ENCODE measurements at regions of chr10 and their contacts with region 1.

Region 1: GRCh38 chr10:31146491-31147209 is 115.0 kb upstream of the ZNF438 start:
- DNase-seq: no peak
- ATAC-seq: no peak; the same call in 1 of the 2 replicates
- H3K4me3 ChIP-seq: no peak overlapping the region
- H3K27ac ChIP-seq: no peak overlapping the region
- H3K4me1 ChIP-seq: no peaks in the 10 kb centered on the region
- H3K27me3 ChIP-seq: no peaks in the 10 kb centered on the region
- CTCF ChIP-seq: no peak

Region 2: GRCh38 chr10:31166606-31167005 is 20.0 kb after region 1 on chr10:
- CTCF ChIA-PET with region 1: no interaction called
- POLR2A ChIA-PET with region 1: interaction called, 10 read pairs
- in situ Hi-C with region 1: no loop called
- intact Hi-C with region 1: no loop called
- DNase-seq: no peak
- ATAC-seq: no peak
- H3K4me3 ChIP-seq: no peak overlapping the region
- H3K27ac ChIP-seq: no peak overlapping the region
- H3K4me1 ChIP-seq: no peaks in the 10 kb centered on the region
- H3K27me3 ChIP-seq: no peaks in the 10 kb centered on the region
- CTCF ChIP-seq: no peak

Region 3: DNA sequence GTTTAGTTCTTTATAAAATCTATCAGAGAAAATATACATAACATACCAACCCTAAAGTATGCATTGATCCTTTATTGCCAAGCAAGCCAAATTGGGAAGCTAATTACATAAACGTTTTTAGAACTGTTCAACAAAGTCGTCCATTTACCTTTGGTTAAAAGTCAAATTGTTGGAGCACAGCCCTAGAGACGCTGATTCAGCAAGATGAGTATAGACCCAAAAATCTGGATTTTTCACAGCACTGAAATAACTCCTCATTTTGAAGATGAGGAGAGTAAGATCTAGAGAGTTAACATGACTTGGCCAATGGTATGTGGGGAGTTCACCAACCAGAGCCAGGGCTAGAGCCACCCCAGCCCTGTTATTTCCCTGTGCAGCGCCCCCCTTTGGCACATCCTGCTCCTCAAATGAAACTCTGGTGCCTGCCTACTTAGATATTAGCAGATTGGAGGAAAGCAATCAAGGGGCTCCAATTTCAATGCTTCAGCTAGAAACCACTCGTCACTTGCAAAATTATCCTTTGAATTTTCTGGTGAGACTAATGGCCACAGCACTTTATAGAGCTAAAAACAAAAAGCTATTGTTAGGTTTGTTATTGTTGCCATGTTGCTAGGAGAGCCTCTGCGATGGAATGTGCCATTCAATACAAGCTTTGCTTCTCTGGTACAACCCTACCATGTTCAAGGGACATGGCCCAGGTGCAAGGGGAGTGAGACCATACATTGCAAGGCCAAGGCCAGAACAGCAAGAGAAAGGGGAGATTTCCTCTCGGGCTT is 39.8 kb after region 1 on chr10:
- CTCF ChIA-PET with region 1: no interaction called
- POLR2A ChIA-PET with region 1: no interaction called
- in situ Hi-C with region 1: no loop called
- intact Hi-C with region 1: no loop called
- DNase-seq: no peak
- ATAC-seq: no peak
- H3K4me3 ChIP-seq: no peak overlapping the region
- H3K27ac ChIP-seq: no peak overlapping the region
- H3K4me1 ChIP-seq: no peaks in the 10 kb centered on the region
- H3K27me3 ChIP-seq: no peaks in the 10 kb centered on the region
- CTCF ChIP-seq: no peak

Region 4: GRCh38 chr10:31215052-31215451 is 68.4 kb after region 1 on chr10:
- CTCF ChIA-PET with region 1: no interaction called
- POLR2A ChIA-PET with region 1: no interaction called
- in situ Hi-C with region 1: no loop called
- intact Hi-C with region 1: no loop called
- DNase-seq: no peak
- ATAC-seq: no peak
- H3K4me3 ChIP-seq: no peak overlapping the region
- H3K27ac ChIP-seq: no peak overlapping the region
- H3K4me1 ChIP-seq: no peaks in the 10 kb centered on the region
- H3K27me3 ChIP-seq: peaks cover 2% of the 10 kb centered on the region; the same call in 1 of the 2 replicates
- CTCF ChIP-seq: no peak

Region 5: DNA sequence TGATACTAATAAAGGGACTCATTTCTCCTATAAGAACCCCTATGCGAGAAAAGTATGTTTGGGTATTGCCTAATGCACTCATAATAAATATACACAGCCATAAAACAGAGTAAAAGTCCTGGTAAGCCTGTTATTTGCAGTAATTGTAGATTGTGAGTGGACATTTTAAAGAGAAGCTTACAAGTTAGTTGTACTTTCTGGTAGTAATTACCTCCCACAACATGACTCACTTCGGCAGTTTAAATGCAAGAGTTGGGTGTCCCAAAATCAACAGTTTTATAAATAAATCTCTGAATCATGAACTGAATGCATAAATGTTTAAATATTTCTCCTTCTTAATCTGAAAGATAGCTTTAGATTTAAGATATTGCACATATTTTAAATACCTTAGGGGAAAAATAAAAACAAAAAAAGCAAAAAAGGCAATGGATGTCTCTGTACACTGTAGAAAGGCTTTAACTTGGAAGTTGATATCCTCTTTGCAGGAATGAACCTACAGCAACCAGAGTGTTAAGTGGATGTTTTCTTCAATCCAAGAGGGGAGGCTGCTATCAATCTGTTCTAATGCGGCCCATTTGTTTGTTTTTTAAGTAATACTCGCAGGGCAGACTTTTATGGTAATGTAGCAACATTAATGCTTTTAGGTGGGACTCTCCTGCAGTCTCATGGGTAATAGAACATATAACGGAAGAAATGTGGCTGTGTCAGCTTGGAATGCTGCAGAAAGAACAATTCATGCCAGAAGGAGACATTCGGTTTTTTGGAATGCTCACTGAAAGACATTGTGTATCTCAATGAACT is 115.1 kb after region 1 on chr10:
- CTCF ChIA-PET with region 1: no interaction called
- POLR2A ChIA-PET with region 1: no interaction called
- in situ Hi-C with region 1: no loop called
- intact Hi-C with region 1: no loop called
- DNase-seq: no peak
- ATAC-seq: no peak
- H3K4me3 ChIP-seq: no peak overlapping the region
- H3K27ac ChIP-seq: no peak overlapping the region
- H3K4me1 ChIP-seq: no peaks in the 10 kb centered on the region
- H3K27me3 ChIP-seq: no peaks in the 10 kb centered on the region
- CTCF ChIP-seq: no peak

Measured in Panc1 (cell line).